ENCODE measurements at regions of chr13 and their contacts with region 1.

Region 1: DNA sequence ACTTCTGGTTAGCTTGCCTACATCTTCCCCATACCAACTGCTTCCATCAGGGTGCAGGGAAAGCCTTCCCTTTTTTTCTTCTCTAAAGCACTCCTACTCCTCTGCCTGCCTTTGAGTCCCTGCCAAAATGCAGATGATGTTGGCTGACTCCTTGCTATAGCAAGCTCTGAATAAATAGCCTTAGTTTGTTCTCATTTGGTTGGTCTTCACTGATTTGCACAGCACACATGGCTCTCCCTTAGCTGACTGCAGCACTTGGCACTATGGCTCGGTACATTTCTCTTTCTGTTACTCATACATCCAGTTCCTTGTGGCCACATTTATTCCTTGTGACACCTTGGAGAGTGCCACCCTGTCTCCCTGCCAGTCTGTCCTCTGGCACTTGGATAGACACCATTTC is 249.8 kb downstream of the DCLK1 start:
- DNase-seq: no peak
- ATAC-seq: no peak
- H3K4me3 ChIP-seq: no peak overlapping the region
- H3K27ac ChIP-seq: no peak overlapping the region
- H3K4me1 ChIP-seq: no peaks in the 10 kb centered on the region
- H3K27me3 ChIP-seq: no peaks in the 10 kb centered on the region
- CTCF ChIP-seq: no peak
- EP300 ChIP-seq: no peak
- POLR2A ChIP-seq: no peak
- RAD21 ChIP-seq: no peak

Region 2: DNA sequence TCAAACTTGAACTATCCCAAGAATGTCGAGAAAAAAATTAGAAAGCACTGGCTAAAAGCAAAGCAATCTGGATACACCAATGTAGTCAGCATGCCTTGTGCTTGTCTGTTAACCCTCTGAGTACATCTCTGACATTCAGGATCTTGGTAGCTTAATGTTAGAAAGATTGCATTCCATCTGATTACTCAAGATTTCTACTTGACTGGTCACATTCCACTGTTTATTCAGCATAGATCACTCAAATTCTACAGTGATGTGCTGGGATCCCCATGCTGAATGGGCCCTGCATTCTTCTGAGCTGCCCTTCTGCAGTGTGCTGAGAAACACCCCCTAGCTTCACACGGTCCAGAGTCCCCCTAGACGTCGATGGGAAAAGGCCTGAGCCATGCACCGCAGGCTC is 109.5 kb before region 1 on chr13:
- CTCF ChIA-PET with region 1: no interaction called
- POLR2A ChIA-PET with region 1: no interaction called
- in situ Hi-C with region 1: no loop called
- intact Hi-C with region 1: no loop called
- DNase-seq: no peak
- ATAC-seq: peak; percentile 32; the same call in 2 of the 3 replicates
- H3K4me3 ChIP-seq: no peak overlapping the region
- H3K27ac ChIP-seq: no peak overlapping the region
- H3K4me1 ChIP-seq: no peaks in the 10 kb centered on the region
- H3K27me3 ChIP-seq: no peaks in the 10 kb centered on the region; a peak in 1 of 5 replicates
- CTCF ChIP-seq: no peak
- EP300 ChIP-seq: no peak
- POLR2A ChIP-seq: no peak
- RAD21 ChIP-seq: no peak

Region 3: DNA sequence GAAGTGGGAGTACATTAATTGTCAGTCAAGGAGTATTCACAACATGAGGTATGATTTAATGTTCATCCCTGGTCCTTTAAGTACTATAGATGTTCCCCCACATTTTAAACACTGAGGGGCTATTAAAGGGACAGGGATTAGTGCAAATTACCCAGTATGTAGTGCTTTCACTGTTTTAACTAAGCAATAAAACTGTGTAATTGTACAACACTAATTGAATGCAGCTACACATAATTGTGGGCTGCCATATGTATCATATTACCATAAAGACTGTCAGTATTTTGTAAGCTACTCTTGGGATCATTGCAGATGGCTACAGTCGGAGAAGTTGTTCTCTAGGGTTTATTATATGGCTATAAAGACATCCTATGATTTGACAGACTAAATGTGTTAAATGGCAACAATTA is 66.8 kb before region 1 on chr13:
- CTCF ChIA-PET with region 1: no interaction called
- POLR2A ChIA-PET with region 1: no interaction called
- in situ Hi-C with region 1: no loop called
- intact Hi-C with region 1: no loop called
- DNase-seq: no peak
- ATAC-seq: no peak
- H3K4me3 ChIP-seq: no peak overlapping the region
- H3K27ac ChIP-seq: no peak overlapping the region
- H3K4me1 ChIP-seq: no peaks in the 10 kb centered on the region
- H3K27me3 ChIP-seq: no peaks in the 10 kb centered on the region; a peak in 1 of 5 replicates
- CTCF ChIP-seq: no peak
- EP300 ChIP-seq: no peak
- POLR2A ChIP-seq: no peak
- RAD21 ChIP-seq: no peak

Region 4: GRCh38 chr13:35917252-35917941 is 36.0 kb after region 1 on chr13:
- CTCF ChIA-PET with region 1: no interaction called
- POLR2A ChIA-PET with region 1: no interaction called
- in situ Hi-C with region 1: no loop called
- intact Hi-C with region 1: loop called (anchors 1 kb)
- DNase-seq: no peak
- ATAC-seq: no peak
- H3K4me3 ChIP-seq: no peak overlapping the region
- H3K27ac ChIP-seq: no peak overlapping the region
- H3K4me1 ChIP-seq: no peaks in the 10 kb centered on the region
- H3K27me3 ChIP-seq: peaks cover 0 to 15% of the 10 kb centered on the region in 2 experiments; a peak in 1 of 5 replicates
- CTCF ChIP-seq: no peak
- EP300 ChIP-seq: no peak
- POLR2A ChIP-seq: no peak
- RAD21 ChIP-seq: no peak

Region 5: DNA sequence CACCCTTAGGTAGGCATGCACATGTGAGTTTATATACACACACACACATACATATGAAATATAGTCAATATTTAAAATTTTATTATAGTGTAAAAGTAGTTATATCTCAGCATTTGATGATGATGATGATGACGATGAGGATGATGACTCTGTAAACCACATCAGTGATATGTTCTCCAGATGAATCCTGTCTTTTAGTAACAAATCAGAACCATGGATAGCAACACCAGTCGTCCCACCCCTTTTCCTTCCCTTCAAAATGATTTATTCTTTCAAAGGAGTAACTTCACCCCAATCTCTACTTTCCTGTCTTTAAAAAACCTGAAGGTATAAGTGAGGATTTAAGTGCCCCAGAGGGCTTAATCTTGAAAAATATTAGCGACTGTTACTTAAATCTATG is 175.7 kb after region 1 on chr13:
- CTCF ChIA-PET with region 1: no interaction called
- POLR2A ChIA-PET with region 1: no interaction called
- in situ Hi-C with region 1: no loop called
- intact Hi-C with region 1: no loop called
- DNase-seq: no peak
- ATAC-seq: no peak
- H3K4me3 ChIP-seq: no peak overlapping the region
- H3K27ac ChIP-seq: no peak overlapping the region
- H3K4me1 ChIP-seq: no peaks in the 10 kb centered on the region
- H3K27me3 ChIP-seq: no peaks in the 10 kb centered on the region
- CTCF ChIP-seq: no peak
- EP300 ChIP-seq: no peak
- POLR2A ChIP-seq: no peak
- RAD21 ChIP-seq: no peak

Region 6: DNA sequence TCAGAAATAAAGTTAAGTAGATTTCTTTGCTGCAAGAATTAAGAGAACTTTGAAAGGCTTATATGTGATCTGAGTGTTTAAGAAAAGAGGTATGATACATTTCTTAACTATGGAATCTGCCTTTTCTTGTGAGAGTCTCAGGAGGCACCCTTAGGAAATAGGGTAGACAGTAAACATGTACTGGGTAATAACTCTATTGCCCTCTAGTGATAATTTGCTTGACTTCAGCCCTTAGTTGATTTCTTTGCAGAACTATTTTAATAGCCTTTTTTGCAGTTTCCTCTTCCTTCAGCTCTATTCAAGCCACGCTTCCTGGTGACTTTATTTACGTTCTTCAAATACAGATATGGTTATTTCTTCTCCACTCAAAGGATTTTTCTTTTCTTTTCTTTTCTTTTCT is 513.9 kb after region 1 on chr13:
- CTCF ChIA-PET with region 1: no interaction called
- POLR2A ChIA-PET with region 1: no interaction called
- in situ Hi-C with region 1: no loop called
- intact Hi-C with region 1: no loop called
- DNase-seq: peak; percentile 5
- ATAC-seq: peak; percentile 66
- H3K4me3 ChIP-seq: no peak overlapping the region
- H3K27ac ChIP-seq: no peak overlapping the region
- H3K4me1 ChIP-seq: no peaks in the 10 kb centered on the region
- H3K27me3 ChIP-seq: no peaks in the 10 kb centered on the region
- CTCF ChIP-seq: peak; percentile 41
- EP300 ChIP-seq: no peak
- POLR2A ChIP-seq: no peak
- RAD21 ChIP-seq: no peak

Measured in HepG2 (cell line).